Naive thymus-derived CD4-positive, alpha-beta T cell (primary cell): ENCODE measurements at regions of chr3 and their contacts with region 1.

Region 1: GRCh38 chr3:72270072-72270681 is 485.2 kb upstream of the PROK2 start:
- DNase-seq: no peak
- ATAC-seq: peak; percentile 72
- H3K4me3 ChIP-seq: no peak overlapping the region
- H3K4me3 Mint-ChIP-seq: peak overlapping the region in 5 of 10 donors; percentile 26 to 55 (median 49)
- H3K27ac ChIP-seq: no peak overlapping the region
- H3K27ac Mint-ChIP-seq: peak overlapping the region in 6 of 9 donors; percentile 5 to 83 (median 34)
- H3K4me1 ChIP-seq: peaks cover 0 to 42% of the 10 kb centered on the region in 2 donors
- H3K4me1 Mint-ChIP-seq: peaks cover 38 to 80% (median 74%) of the 10 kb centered on the region in 7 donors
- H3K27me3 ChIP-seq: no peaks in the 10 kb centered on the region
- H3K27me3 Mint-ChIP-seq: no peaks in the 10 kb centered on the region

Region 2: DNA sequence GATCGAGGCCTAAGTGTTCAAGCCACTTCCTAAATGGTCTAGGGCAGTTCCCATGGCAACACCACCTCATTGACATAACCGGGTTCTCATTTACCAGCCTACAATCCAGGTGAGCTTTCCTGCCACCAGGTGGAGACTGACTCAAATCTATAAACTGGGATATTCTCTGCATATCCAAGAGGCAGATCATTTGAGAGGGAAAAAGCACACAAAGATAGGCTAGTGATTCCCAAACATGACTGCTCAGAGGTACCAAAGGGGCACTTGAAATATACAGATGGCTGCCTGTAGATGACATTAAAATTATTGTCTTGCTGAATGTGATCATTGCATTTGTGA is 343.9 kb before region 1 on chr3:
- CTCF ChIA-PET with region 1: no interaction called
- POLR2A ChIA-PET with region 1: no interaction called
- intact Hi-C with region 1: loop called in 1 of 2 experiments (anchors 1 kb)
- DNase-seq: peak in 4 of 9 donors; percentile 10 to 35 (median 15)
- ATAC-seq: no peak
- H3K4me3 ChIP-seq: no peak overlapping the region
- H3K4me3 Mint-ChIP-seq: no peak overlapping the region
- H3K27ac ChIP-seq: no peak overlapping the region
- H3K27ac Mint-ChIP-seq: peak overlapping the region in 1 of 9 donors; percentile 18
- H3K4me1 ChIP-seq: no peaks in the 10 kb centered on the region
- H3K4me1 Mint-ChIP-seq: peaks cover 0 to 5% (median 0%) of the 10 kb centered on the region in 7 donors
- H3K27me3 ChIP-seq: no peaks in the 10 kb centered on the region
- H3K27me3 Mint-ChIP-seq: peaks cover 0 to 4% (median 0%) of the 10 kb centered on the region in 5 donors

Region 3: GRCh38 chr3:72152551-72153476 is 117.4 kb before region 1 on chr3:
- CTCF ChIA-PET with region 1: no interaction called
- POLR2A ChIA-PET with region 1: no interaction called
- intact Hi-C with region 1: no loop called
- DNase-seq: no peak
- ATAC-seq: no peak
- H3K4me3 ChIP-seq: no peak overlapping the region
- H3K4me3 Mint-ChIP-seq: no peak overlapping the region
- H3K27ac ChIP-seq: no peak overlapping the region
- H3K27ac Mint-ChIP-seq: no peak overlapping the region
- H3K4me1 ChIP-seq: no peaks in the 10 kb centered on the region
- H3K4me1 Mint-ChIP-seq: peaks cover 0 to 4% (median 1%) of the 10 kb centered on the region in 7 donors
- H3K27me3 ChIP-seq: no peaks in the 10 kb centered on the region
- H3K27me3 Mint-ChIP-seq: peaks cover 0 to 3% (median 0%) of the 10 kb centered on the region in 5 donors

Region 4: GRCh38 chr3:72214066-72214951 is 55.9 kb before region 1 on chr3:
- CTCF ChIA-PET with region 1: no interaction called
- POLR2A ChIA-PET with region 1: no interaction called
- intact Hi-C with region 1: no loop called
- DNase-seq: no peak
- ATAC-seq: no peak
- H3K4me3 ChIP-seq: no peak overlapping the region
- H3K4me3 Mint-ChIP-seq: no peak overlapping the region
- H3K27ac ChIP-seq: no peak overlapping the region
- H3K27ac Mint-ChIP-seq: no peak overlapping the region
- H3K4me1 ChIP-seq: no peaks in the 10 kb centered on the region
- H3K4me1 Mint-ChIP-seq: no peaks in the 10 kb centered on the region
- H3K27me3 ChIP-seq: no peaks in the 10 kb centered on the region
- H3K27me3 Mint-ChIP-seq: peaks cover 0 to 10% (median 0%) of the 10 kb centered on the region in 5 donors